Right ventricle myocardium superior (tissue), 1 donor: ENCODE measurements at regions of chr3 and their contacts with region 1.

Region 1: DNA sequence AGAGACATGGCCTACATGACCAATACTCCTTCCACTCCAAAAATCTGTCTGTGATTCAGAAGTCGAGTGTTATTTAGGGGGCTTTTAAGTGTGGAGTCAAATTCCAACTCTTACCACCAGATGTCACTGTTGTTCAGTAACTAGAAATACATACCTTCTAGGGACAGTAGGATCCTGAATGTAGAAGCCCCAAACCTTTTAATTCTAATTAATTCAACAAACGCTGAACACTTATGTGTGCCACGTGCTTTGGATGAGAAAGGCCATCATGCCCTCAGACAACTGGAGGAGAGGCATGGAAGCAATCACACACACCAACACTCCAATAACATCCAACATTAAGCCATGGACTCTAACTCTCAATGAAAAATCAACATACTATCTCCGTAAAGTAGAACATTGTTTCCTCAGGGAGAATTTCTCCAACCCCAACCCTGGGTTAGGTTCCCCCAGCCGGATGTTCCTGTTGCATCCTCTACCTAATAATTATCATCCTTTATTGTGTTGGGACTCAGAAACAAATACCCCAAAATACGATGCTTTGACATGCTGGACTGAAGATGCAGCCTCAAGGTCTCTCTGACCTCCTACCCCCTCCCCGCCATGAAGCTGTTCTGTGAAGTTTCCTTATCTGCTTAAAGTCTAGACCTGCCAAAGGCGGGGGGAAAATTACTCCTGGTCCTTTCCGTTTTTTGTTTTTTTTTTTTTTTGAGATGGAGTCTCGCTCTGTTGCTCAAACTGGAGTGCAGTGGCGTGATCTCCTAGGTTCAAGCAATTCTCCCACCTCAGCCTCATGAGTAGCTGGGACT is 8.0 kb upstream of the CCDC13 start:
- DNase-seq: no peak
- ATAC-seq: peak; percentile 70

Region 2: GRCh38 chr3:42556089-42556632 is 224.9 kb before region 1 on chr3:
- intact Hi-C with region 1: no loop called
- DNase-seq: no peak
- ATAC-seq: no peak

Region 3: DNA sequence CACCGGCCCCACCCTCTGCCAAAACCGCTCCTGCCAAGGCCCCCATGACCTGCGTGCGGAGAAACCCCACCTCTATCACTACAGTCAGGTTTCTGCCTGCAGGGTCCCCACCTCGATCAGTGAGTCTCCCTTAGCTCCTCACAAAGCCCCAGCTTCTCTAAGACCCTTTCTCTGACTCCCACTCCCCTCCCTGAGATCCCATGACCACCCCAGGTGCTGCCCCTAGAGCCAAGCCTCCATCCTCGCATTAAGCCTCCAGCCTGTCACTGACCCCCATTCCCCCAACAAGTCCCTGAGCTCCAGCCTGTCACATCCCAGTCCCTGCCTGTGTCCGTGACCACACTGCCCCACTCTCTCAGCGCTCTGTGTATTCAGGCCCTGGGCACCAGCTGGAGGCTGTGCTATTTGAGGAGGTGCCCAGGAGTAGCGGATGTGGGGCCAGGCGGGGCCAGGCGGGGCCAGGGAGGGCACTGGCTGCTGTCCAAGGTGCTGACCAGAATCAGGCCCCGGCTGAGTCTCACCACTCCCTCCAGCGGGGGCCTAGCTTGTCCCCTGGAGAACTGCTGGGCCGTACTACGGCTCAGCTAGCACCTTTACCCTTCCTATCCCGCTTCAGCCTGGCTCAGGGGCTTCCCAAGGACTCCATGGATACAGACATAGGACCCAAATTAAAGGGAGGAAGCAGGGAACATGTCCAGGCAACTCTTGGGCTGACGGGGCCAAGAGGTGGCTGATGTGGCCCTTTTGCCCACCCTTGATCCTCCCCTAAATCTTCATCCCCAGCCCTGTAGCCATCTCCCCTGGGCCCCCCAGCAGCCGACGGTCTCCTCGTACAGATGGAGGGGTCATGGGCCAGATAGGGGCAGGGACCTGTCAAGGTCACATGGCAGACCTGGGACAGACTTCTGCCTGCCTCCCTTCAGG is 79.7 kb before region 1 on chr3:
- intact Hi-C with region 1: no loop called
- DNase-seq: peak; percentile 89
- ATAC-seq: peak; percentile 74

Region 4: GRCh38 chr3:42831321-42831713 is 50.2 kb after region 1 on chr3:
- intact Hi-C with region 1: loop called (anchors 5 kb)
- DNase-seq: peak; percentile 75
- ATAC-seq: peak; percentile 77

Region 5: GRCh38 chr3:42880601-42881451 is 99.7 kb after region 1 on chr3:
- intact Hi-C with region 1: loop called (anchors 5 kb)
- DNase-seq: peak; percentile 92
- ATAC-seq: peak; percentile 99